Cardiac septum (tissue), 1 donor: ENCODE measurements at regions of chr6 and their contacts with region 1.

Region 1: DNA sequence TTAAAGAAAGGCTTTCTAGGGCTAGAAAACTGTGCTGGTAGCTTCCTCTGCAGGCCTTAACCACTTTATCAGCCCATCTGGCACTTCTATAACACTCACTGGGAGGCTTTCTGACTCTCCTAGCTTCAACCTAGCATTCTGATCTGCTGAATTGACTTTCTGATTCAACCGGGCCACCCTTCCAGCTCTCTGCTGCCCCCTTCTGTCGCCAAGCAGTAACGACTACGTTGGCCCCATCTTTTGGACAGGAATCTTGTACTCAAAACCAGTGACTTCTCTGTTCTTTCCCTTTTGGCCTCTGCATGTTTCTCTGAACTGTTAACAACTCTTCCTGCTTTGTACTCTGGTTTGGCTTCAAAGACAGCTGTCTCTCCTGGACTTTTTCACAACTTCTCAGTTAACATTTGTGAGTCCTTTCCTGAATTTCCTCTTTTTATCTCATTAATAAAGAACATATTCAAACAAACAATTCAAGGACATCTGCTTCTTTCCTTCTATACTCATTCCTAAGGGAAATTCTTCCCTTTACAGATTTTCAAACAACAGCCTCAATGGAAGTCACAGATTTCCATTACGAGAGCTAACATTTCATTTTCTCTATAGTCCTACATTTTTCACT is 43.9 kb upstream of the FAM135A start:
- DNase-seq: no peak

Region 2: DNA sequence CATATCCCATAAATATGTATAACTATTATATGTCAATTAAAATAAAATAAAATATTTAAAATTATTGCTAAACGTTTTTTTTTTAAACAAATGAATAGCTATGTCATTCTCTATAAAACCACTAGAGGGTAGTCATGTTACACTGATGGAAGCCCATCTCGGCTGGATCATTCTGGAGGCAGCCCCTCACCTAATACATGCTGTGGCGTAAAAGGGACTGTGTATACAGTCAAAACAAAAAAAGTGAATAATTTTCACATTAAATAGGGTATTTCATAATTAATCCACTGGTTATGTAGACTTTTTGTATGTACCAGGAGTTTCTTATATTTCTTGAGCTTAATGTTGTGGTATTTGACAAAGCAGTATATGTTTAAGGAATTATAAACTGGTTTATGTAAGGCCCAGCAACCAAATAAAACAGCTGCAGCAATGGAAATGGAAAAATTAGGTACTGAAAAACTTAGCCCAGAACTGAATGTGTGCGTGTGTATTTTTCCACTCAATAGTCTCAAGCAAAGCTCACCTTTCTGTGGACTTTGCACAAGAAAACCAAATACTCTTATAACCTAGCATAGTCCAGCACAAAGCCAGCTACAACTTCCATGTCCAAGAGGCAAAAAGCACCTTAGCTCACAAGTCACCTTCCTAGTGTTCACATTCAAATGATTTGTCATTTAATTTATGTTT is 148.3 kb before region 1 on chr6:
- intact Hi-C with region 1: loop called (anchors 5 kb)
- DNase-seq: no peak

Region 3: GRCh38 chr6:70304616-70305015 is 64.8 kb before region 1 on chr6:
- intact Hi-C with region 1: loop called (anchors 2 kb)
- DNase-seq: no peak

Region 4: DNA sequence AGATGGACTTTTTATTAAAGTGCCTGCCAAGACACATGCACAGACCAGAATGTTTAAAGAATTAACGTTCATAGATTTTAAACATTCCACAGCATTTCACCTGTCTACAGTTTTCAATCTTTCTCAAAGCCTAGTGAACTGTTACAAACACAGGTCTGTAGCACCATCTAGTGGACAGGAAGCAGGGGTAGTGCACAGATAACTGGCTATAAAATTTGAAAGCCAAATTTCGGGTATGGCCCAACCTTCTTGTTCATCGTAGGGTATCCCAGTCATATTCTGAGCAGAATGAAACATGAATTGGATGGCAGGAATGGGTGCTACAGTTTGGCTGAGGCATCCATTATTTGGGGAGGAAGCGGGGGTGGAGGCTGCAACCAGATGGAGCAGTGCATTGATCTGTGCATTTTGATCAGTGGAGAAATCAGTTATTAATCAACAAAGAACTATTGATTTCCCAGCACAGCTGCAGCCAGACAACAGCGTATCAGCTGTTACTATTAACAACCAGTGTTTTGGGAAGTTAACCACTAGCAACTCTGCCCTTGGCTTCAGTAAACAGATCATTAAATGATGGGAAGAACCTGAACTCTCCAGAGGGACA is 643.5 kb after region 1 on chr6:
- intact Hi-C with region 1: loop called (anchors 10 kb)
- DNase-seq: no peak